Head of caudate nucleus (tissue), 42 donors: ENCODE measurements at regions of chr19 and their contacts with region 1.

Region 1: GRCh38 chr19:44164673-44165512 is at the start of gene ZNF226:
- DNase-seq: peak; percentile 85 to 99 (median 96)

Region 2: GRCh38 chr19:43901395-43902390 is 263.2 kb before region 1 on chr19:
- intact Hi-C with region 1: no loop called
- DNase-seq: peak; percentile 71 to 94 (median 86)

Region 3: DNA sequence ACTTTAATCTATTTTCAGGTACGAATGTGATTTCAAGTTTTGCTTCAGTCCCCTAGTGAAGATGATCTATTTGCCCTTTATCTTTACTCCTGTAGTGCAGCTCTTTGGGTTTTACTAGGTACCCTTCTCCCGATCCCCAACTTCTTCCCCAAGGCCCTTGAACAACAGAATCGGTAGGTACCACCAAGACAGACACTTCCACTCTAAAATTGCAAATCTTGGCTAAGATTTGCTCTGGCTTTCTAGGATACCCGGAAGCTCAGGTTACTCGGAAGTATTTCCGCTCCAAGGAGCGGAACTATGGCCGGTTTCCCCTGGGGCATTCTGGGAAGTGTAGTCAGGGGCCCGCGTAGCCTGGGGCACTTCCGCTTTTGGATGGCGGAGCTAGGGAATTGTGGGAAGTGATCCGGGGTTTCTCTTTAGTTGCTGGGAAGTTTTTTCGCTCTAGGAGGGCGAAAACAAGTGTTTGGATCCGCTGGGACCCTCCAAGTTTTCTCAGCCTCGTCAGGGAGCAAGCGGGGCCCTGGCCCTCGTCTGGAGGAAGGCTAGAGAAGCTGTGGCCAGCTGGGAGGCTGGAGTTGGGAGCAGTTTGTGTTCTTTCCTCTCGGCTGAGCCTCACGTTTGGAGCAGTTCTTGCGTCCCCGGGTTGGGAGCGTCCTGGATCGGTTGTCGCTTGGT is 42.4 kb after region 1 on chr19:
- intact Hi-C with region 1: loop called (anchors 2 kb)
- DNase-seq: peak; percentile 80 to 97 (median 90)